ENCODE measurements at regions of chr1 and their contacts with region 1.

Region 1: GRCh38 chr1:17661546-17662157 is 93.5 kb upstream of the ACTL8 start:
- DNase-seq: peak in 4 of 5 donors; percentile 51 to 78 (median 64)
- H3K4me3 ChIP-seq: no peak overlapping the region
- H3K27ac ChIP-seq: no peak overlapping the region
- H3K4me1 ChIP-seq: no peaks in the 10 kb centered on the region
- H3K27me3 ChIP-seq: no peaks in the 10 kb centered on the region
- CTCF ChIP-seq: peak; percentile 32 to 48 (median 46)
- EP300 ChIP-seq: no peak
- POLR2A ChIP-seq: no peak

Region 2: DNA sequence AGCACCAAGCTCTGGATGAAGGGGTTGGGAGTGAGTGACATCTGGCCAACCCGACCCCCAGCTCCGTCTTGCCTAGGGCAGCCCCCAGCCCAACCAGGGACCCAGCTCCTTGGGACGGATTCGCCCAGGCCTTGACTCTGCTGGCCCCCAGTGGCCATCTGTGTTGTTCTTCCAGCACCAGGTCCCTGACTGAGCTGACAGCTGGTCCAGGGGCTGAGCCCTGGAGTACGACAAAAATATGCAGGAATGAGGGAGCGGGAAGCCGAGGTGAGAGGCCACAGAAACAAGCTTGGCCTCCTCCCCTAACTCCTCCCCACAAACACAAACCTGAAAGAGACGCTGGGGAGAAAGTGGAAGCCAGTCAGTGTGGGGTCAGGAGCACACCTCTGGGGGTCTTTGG is 914.0 kb after region 1 on chr1:
- intact Hi-C with region 1: loop called in 1 of 4 experiments (anchors 10 kb)
- DNase-seq: peak in 3 of 5 donors; percentile 31 to 56 (median 36)
- H3K4me3 ChIP-seq: no peak overlapping the region
- H3K27ac ChIP-seq: no peak overlapping the region
- H3K4me1 ChIP-seq: no peaks in the 10 kb centered on the region
- H3K27me3 ChIP-seq: no peaks in the 10 kb centered on the region
- CTCF ChIP-seq: no peak
- EP300 ChIP-seq: no peak
- POLR2A ChIP-seq: no peak